ENCODE measurements at regions of chr19 and their contacts with region 1.

Region 1: GRCh38 chr19:38769635-38770211 is 3.6 kb downstream of the LGALS7 start:
- DNase-seq: peak; percentile 87
- CTCF ChIP-seq: peak; percentile 90

Region 2: DNA sequence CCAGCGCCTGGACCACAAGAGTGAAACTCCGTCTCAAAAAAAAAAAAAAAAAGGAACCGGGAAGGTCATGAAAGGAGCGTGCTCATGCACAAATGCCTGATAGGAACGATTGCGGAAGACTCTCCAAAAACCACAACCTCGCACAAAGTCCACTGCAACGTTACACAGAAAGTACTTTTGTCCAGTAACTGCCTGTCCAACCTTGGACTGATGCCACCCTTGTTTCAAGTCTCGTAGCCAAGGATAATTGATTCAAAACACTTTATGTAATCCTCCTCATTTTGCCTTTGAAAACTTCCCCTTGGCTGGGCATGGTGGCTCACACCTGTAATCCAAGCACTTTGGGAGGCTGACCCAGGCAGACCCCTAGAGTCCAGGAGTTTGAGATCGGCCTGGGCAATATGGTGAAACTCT is 10.1 kb before region 1 on chr19:
- CTCF ChIA-PET with region 1: interaction called, 17 read pairs
- POLR2A ChIA-PET with region 1: no interaction called
- DNase-seq: no peak
- CTCF ChIP-seq: no peak

Region 3: GRCh38 chr19:38784224-38784623 is 14.5 kb after region 1 on chr19:
- CTCF ChIA-PET with region 1: interaction called, 16 read pairs
- POLR2A ChIA-PET with region 1: no interaction called
- DNase-seq: no peak
- CTCF ChIP-seq: no peak

Region 4: DNA sequence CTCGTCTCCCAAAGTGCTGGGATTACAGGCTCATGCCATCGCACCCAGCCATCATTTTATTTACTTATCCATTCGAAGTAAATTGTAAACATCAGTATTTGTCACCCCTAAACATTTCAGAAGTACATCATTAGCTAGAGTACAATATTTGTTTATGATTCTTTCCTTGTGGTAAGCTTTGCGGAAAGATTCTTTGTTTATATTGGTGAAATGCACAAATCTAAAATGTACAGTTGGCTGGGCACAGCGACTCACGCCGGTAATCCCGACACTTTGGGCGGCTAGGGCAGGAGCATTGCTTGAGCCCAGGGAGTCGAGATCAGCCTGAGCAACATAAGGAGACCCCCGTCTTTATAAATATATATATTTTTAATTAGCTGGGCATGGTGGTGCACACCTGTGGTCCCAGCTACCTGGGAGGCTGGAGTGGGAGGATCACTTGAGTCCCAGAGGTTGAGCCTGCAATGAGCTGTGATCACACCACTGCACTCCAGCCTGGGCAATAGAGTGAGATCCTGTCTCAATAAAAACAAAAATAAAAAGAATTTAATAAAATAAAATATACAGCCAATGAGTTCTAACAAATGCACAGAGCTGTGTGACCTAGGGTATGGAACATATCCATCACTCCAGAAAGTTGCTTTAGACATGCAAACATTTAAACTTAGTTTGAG is 29.5 kb after region 1 on chr19:
- CTCF ChIA-PET with region 1: interaction called, 10 read pairs
- POLR2A ChIA-PET with region 1: no interaction called
- DNase-seq: no peak
- CTCF ChIP-seq: no peak

Region 5: DNA sequence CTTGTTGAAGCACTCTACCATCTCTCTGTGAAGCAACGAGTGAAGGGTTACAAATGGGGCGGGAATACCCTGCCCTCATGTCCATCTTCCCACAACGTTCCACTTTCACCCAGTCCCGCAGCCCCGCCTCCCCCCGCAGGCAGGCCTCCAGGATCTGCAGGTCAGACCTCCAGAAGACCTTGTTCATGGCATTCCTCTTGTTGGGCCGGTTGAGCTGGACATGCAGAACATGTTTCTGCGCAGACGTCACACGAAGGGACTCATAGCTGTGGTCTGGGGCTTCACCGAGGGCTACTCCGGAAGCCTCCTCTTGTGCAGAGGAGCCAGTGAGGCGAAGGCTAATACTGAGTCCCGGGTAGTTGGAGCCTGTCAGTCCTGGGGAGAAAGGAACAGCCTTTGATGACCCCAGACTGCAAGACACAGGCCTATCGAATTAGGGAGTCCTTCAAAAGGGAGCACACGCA is 61.5 kb after region 1 on chr19:
- CTCF ChIA-PET with region 1: interaction called, 14 read pairs
- POLR2A ChIA-PET with region 1: interaction called, 5 read pairs
- DNase-seq: peak; percentile 74
- CTCF ChIP-seq: no peak

Measured in GM10248 (cell line).